Activated T-helper 2 cell treated with anti-CD3 and anti-CD28 coated beads, Interferon-gamma antibody, Interleukin-2, Interleukin-4, amounts not matched to agents 10 μg/mL and 5 μg/mL and 100 μg/mL, durations not matched to agents 14 hours and 24 hours and 36 hours (primary cell): ENCODE measurements at regions of chrX and their contacts with region 1.

Region 1: GRCh38 chrX:136694431-136695087 is 46.6 kb downstream of the CD40LG start:
- DNase-seq: no peak
- H3K4me3 Mint-ChIP-seq: peak overlapping the region; percentile 77
- H3K27ac Mint-ChIP-seq: peak overlapping the region; percentile 98
- H3K4me1 Mint-ChIP-seq: peaks cover 63% of the 10 kb centered on the region
- H3K27me3 Mint-ChIP-seq: no peaks in the 10 kb centered on the region

Region 2: DNA sequence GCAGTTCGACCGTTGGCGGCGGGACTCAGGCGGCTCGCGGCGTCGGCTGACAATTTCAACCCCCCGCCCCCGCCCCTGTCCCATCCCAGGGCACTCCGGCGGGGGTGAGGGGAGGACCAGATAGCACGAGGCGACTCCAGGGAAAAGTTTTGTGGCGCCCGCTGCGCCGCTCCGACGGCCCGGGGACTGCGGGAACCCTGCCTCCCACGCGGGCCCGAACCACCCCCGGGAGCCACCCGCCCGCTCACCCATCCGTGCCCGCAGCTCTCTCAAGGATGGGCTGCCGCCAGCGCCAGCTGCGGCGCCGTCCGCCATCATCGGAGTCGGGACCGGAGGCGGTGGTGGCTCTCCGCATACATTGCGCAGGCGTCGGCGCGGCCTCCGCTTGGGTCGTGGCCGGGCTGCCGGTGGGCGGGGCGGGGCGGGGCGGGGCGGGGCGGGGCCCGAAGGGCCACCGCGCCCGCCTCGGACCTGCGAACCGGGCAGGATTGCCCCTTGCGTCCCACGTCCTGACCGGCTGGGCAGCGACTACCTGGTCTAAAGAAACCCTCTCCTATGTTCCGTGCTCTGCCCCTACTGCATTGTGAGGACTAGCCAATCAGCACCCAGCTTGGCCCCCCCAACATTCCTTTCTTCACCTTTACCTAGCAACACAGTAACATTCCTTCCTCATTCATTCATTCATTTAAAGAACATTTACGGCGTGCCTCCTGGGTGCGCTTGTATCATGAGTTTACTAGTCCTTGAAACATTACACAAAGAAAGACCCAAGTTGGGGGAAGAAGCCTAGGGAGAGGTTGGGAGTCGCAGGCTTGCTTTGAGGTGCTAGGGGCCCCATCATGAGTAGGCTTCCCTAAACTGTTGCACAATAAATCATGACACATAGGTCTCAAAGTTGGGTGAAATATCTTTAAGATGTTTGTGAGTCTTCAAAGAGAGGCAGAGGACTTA is 443.2 kb before region 1 on chrX and contains the start of gene MAP7D3:
- intact Hi-C with region 1: loop called (anchors 10 kb)
- DNase-seq: peak; percentile 58
- H3K4me3 Mint-ChIP-seq: peak within 1 kb of the TSS; percentile 88
- H3K27ac Mint-ChIP-seq: peak within 1 kb of the TSS; percentile 90
- H3K4me1 Mint-ChIP-seq: peaks cover 13% of the 10 kb centered on the region
- H3K27me3 Mint-ChIP-seq: no peaks in the 10 kb centered on the region
- total RNA-seq, gene MAP7D3: 28.1 and 28.6 TPM in 2 replicates

Region 3: GRCh38 chrX:136496770-136497598 is 197.6 kb before region 1 on chrX and contains the start of gene HTATSF1:
- intact Hi-C with region 1: loop called (anchors 2 kb)
- DNase-seq: peak; percentile 83
- H3K4me3 Mint-ChIP-seq: peak within 1 kb of the TSS; percentile 93
- H3K27ac Mint-ChIP-seq: peak within 1 kb of the TSS; percentile 95
- H3K4me1 Mint-ChIP-seq: peaks cover 11% of the 10 kb centered on the region
- H3K27me3 Mint-ChIP-seq: peaks cover 3% of the 10 kb centered on the region
- total RNA-seq, gene HTATSF1: 43.8 and 47.3 TPM in 2 replicates

Region 4: DNA sequence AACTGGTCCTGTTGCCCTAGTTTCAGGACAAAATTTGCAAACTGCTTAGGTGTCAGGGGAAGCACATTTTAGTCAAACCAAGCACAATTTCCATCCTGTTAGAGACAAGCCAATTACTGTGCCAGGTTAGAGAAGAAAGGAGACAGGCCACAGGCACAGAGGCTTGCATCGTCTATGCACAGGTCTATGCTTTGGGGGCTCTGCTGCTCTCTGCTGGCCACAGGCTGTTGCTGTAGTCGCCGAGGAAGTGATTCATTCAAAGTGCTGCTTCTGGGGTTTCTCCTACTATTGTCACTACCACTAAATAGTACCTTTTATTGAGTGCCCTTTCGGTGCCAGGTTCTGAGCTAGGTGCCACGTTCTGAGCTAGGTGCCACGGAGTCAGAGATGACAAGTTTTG is 117.0 kb before region 1 on chrX:
- intact Hi-C with region 1: loop called (anchors 2 kb)
- DNase-seq: peak; percentile 57
- H3K4me3 Mint-ChIP-seq: no peak overlapping the region
- H3K27ac Mint-ChIP-seq: peak overlapping the region; percentile 64
- H3K4me1 Mint-ChIP-seq: peaks cover 33% of the 10 kb centered on the region
- H3K27me3 Mint-ChIP-seq: no peaks in the 10 kb centered on the region

Region 5: GRCh38 chrX:136608295-136609171 is 86.0 kb before region 1 on chrX:
- intact Hi-C with region 1: loop called (anchors 1 kb)
- DNase-seq: peak; percentile 30
- H3K4me3 Mint-ChIP-seq: no peak overlapping the region
- H3K27ac Mint-ChIP-seq: peak overlapping the region; percentile 73
- H3K4me1 Mint-ChIP-seq: peaks cover 44% of the 10 kb centered on the region
- H3K27me3 Mint-ChIP-seq: no peaks in the 10 kb centered on the region

Region 6: DNA sequence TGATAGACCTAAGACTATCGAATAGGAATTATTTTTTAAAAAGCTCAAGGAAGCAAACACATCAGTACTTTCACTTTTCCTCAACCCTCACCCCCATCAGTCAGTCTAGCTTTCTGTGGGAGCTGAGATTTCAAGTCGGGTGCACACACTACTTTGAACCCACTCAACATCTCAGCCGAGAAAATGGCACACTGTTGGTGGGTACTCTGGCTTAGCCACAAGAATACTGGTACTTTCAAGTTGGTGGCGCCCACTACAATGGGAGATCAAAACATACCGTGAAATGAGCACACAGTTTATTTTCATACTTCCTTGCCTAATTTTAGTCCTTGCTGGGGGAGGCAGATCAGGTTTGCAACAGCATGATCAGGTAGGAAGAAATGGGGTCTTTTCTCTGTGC is 36.4 kb before region 1 on chrX:
- intact Hi-C with region 1: loop called (anchors 2 kb)
- DNase-seq: no peak
- H3K4me3 Mint-ChIP-seq: peak overlapping the region; percentile 75
- H3K27ac Mint-ChIP-seq: peak overlapping the region; percentile 97
- H3K4me1 Mint-ChIP-seq: peaks cover 82% of the 10 kb centered on the region
- H3K27me3 Mint-ChIP-seq: no peaks in the 10 kb centered on the region

Region 7: DNA sequence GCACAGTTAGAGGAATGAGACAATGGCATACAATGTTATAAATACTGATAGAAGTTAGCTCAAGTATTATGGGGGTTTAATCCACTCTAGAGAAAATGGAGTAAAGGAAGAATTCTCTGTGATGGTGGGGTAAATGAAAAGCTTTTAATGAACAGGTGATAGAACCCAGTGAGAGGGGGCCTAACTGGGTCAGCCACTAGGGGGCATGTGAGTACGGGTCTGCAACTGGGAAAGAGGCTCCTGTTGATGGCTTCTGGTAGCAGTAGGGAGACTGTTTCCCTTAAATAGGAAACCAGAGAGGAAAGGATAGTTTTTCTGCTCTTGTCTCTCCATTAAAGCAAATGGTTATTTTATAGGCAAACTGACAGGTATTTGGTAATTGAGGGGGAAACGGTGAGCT is 472.0 kb after region 1 on chrX:
- intact Hi-C with region 1: no loop called
- DNase-seq: no peak
- H3K4me3 Mint-ChIP-seq: no peak overlapping the region
- H3K27ac Mint-ChIP-seq: no peak overlapping the region
- H3K4me1 Mint-ChIP-seq: no peaks in the 10 kb centered on the region
- H3K27me3 Mint-ChIP-seq: peaks cover 8% of the 10 kb centered on the region